HepG2 (cell line): ENCODE measurements at regions of chr11 and their contacts with region 1.

Region 1: DNA sequence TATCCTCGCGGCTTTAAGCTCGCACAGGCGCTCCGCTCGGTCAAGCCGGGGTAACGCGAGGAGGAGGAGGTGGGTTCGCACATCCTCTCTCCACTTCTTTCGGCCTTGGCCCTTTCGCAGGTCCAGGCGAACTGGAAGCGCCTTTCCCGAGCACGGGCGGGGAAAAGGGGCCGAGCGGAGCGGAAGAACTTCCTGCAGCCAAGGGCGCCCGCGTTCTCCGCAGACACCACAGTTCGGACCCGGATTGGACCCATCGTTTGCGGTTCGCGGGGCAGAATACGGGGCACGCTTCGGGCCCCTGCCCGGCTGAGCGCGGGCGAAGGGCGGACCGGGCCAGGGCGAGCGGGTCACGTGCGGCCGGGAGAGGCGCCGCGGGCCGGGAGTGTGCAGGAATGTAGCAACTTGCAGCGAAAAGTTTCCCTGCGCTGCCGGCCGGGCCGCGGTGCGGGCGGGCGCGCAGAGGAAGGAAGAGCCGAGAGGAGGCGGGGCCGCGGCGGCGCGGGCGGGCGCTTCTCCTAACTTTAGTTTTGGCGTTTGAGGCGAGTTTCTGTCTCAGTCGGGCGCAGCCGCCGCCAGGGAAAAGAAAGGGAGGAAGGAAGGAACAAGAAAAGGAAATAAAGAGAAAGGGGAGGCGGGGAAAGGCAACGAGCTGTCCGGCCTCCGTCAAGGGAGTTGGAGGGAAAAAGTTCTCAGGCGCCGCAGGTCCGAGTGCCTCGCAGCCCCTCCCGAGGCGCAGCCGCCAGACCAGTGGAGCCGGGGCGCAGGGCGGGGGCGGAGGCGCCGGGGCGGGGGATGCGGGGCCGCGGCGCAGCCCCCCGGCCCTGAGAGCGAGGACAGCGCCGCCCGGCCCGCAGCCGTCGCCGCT is at the start of gene YAP1:
- DNase-seq: peak; percentile 83
- ATAC-seq: peak; percentile 79
- H3K4me3 ChIP-seq: peak within 1 kb of the TSS; percentile 88 to 97 (median 93)
- H3K27ac ChIP-seq: peak within 1 kb of the TSS; percentile 98
- H3K4me1 ChIP-seq: peaks cover 32% of the 10 kb centered on the region
- H3K27me3 ChIP-seq: no peaks in the 10 kb centered on the region; a peak in 1 of 5 replicates
- CTCF ChIP-seq: peak; percentile 20
- EP300 ChIP-seq: peak in 1 of 2 experiments; percentile 66; a peak in 2 of 4 replicates
- POLR2A ChIP-seq: peak; percentile 54 to 71
- RAD21 ChIP-seq: peak; percentile 81; the same call in 1 of the 2 replicates
- total RNA-seq, gene YAP1: 91.0 and 108 TPM in 2 replicates

Region 2: DNA sequence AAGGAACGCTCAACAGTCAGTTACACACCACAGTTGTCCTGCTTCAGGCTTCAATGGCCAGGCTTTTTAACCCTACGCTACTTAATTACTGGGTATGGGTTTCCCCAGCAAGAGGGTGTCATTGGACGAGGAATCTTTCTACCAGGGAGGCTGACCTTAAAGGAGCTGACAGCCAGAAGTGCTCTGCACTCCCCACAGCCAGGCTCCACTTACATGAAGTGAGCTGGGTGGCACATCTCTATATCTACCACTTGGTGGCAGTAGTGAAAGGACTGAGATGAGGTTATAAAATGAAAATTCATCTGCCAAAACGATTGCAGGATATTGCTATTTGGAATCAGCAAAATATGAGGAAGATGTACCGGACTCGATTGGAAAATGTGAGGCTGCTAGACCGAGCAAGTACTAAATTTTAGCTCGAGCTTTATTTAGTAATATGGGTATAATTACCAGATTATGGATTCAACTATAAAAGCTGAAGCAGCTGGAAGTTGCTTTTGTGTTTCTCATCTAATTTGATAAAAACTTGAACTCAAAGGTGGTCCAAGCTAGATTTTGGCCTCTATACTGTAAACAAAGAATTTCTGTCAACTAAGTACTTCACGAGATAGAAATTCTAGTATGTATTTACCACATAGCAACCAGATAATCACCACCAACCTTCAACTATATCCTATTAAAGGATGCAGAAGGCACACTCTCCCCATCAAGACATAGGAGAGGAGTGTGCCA is 249.3 kb before region 1 on chr11:
- CTCF ChIA-PET with region 1: no interaction called
- POLR2A ChIA-PET with region 1: no interaction called
- in situ Hi-C with region 1: no loop called
- intact Hi-C with region 1: loop called (anchors 10 kb)
- DNase-seq: peak; percentile 56
- ATAC-seq: peak; percentile 84
- H3K4me3 ChIP-seq: no peak overlapping the region
- H3K27ac ChIP-seq: no peak overlapping the region
- H3K4me1 ChIP-seq: peaks cover 44% of the 10 kb centered on the region
- H3K27me3 ChIP-seq: no peaks in the 10 kb centered on the region
- CTCF ChIP-seq: peak; percentile 84
- EP300 ChIP-seq: no peak
- POLR2A ChIP-seq: no peak
- RAD21 ChIP-seq: peak; percentile 57

Region 3: GRCh38 chr11:102085864-102086551 is 24.1 kb before region 1 on chr11:
- CTCF ChIA-PET with region 1: no interaction called
- POLR2A ChIA-PET with region 1: interaction called, 9 read pairs
- in situ Hi-C with region 1: no loop called
- intact Hi-C with region 1: loop called (anchors 1 kb)
- DNase-seq: peak; percentile 94
- ATAC-seq: peak; percentile 99
- H3K4me3 ChIP-seq: peak overlapping the region in 2 of 3 experiments; percentile 25 to 37; a peak in 2 of 6 replicates
- H3K27ac ChIP-seq: peak overlapping the region; percentile 48
- H3K4me1 ChIP-seq: peaks cover 26% of the 10 kb centered on the region
- H3K27me3 ChIP-seq: no peaks in the 10 kb centered on the region
- CTCF ChIP-seq: no peak
- EP300 ChIP-seq: peak in 1 of 2 experiments; percentile 82; a peak in 2 of 4 replicates
- POLR2A ChIP-seq: no peak
- RAD21 ChIP-seq: no peak

Region 4: GRCh38 chr11:102139081-102139498 is 29.0 kb after region 1 on chr11:
- CTCF ChIA-PET with region 1: no interaction called
- POLR2A ChIA-PET with region 1: no interaction called
- in situ Hi-C with region 1: no loop called
- intact Hi-C with region 1: no loop called
- DNase-seq: no peak
- ATAC-seq: peak; percentile 72
- H3K4me3 ChIP-seq: no peak overlapping the region
- H3K27ac ChIP-seq: no peak overlapping the region
- H3K4me1 ChIP-seq: peaks cover 51% of the 10 kb centered on the region
- H3K27me3 ChIP-seq: no peaks in the 10 kb centered on the region
- CTCF ChIP-seq: no peak
- EP300 ChIP-seq: no peak
- POLR2A ChIP-seq: no peak
- RAD21 ChIP-seq: no peak

Region 5: DNA sequence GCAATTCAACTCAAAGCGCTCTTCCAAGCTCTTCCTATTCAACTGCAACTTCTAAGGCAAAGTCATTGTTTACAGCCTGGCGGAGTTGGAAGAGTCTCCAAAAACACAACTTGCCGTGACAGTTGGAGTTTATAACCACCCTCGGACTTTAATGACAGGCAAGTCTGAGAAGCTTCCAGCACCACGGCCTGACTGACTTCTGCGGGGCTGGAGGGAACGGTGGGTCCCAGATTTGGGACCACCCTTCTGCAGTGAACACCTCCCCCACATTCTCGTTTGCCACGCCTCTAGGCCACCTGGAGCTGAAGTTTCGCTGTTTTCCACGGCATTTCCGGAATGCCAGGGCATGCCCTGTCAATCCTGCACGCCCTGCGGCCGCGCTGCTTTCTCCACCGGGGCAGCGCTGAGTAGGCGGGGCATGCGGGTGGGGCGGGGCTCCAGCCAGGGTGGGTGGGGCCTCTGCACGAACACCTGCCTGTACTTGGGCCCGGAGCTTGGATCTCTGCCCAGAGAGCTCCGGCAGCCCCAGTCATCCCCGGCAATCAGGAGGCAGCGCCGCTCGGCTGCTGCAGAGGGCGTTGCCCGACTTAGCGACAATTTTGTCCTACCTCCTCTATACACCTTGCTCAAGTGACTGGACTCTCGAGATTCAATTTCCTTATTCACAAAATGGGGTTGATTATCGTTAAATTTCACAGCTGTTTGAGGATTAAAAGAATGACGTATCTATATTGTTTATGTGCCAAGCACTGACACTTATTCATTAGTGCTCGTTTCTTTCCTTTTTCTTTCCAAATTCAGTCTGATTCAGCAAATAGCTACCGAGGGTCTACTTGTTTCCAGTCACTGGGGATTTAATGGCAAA is 158.4 kb after region 1 on chr11:
- CTCF ChIA-PET with region 1: no interaction called
- POLR2A ChIA-PET with region 1: no interaction called
- in situ Hi-C with region 1: no loop called
- intact Hi-C with region 1: loop called (anchors 1 kb)
- DNase-seq: peak; percentile 79
- ATAC-seq: peak; percentile 90
- H3K4me3 ChIP-seq: peak overlapping the region; percentile 51 to 67 (median 56)
- H3K27ac ChIP-seq: peak overlapping the region; percentile 59
- H3K4me1 ChIP-seq: peaks cover 73% of the 10 kb centered on the region
- H3K27me3 ChIP-seq: no peaks in the 10 kb centered on the region
- CTCF ChIP-seq: peak; percentile 69
- EP300 ChIP-seq: no peak
- POLR2A ChIP-seq: peak in 1 of 2 experiments; percentile 49; a peak in 2 of 4 replicates
- RAD21 ChIP-seq: peak; percentile 43; the same call in 1 of the 2 replicates

Region 6: DNA sequence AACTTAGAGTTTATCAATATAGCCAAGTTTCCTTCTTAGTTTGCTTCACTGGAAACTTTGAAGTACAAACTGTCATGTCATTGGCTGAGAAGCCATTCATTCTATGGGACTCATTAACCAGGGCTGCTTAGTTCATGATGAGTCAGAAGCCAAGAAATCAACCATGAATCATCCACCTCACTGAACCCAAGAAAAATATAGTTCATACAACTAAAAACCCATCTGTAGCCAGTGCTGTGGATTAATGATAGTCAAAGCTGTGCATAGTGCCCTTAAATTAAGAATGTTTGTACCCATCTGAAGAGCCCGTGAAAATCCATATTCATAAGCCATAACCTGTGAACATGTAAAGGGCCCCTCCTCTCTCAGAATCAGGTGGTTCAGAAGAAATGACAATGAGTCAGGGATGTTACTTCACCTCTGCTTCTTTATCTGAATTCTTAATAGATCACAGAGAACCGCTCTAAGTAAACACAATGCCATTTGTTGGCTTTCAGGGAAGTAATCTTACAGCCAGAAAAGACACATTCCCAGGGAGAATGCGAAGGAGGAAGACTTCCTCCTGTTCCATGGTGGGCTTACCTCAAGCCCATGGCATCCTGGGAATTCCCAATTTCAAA is 489.6 kb after region 1 on chr11:
- CTCF ChIA-PET with region 1: no interaction called
- POLR2A ChIA-PET with region 1: no interaction called
- in situ Hi-C with region 1: no loop called
- intact Hi-C with region 1: loop called (anchors 10 kb)
- DNase-seq: peak; percentile 89
- ATAC-seq: peak; percentile 61
- H3K4me3 ChIP-seq: no peak overlapping the region; a peak in 1 of 6 replicates
- H3K27ac ChIP-seq: peak overlapping the region; percentile 71
- H3K4me1 ChIP-seq: peaks cover 80% of the 10 kb centered on the region
- H3K27me3 ChIP-seq: no peaks in the 10 kb centered on the region
- CTCF ChIP-seq: no peak
- EP300 ChIP-seq: peak in 1 of 2 experiments; percentile 70; a peak in 2 of 4 replicates
- POLR2A ChIP-seq: no peak
- RAD21 ChIP-seq: no peak